Naive thymus-derived CD4-positive, alpha-beta T cell (primary cell): ENCODE measurements at regions of chr12 and their contacts with region 1.

Region 1: DNA sequence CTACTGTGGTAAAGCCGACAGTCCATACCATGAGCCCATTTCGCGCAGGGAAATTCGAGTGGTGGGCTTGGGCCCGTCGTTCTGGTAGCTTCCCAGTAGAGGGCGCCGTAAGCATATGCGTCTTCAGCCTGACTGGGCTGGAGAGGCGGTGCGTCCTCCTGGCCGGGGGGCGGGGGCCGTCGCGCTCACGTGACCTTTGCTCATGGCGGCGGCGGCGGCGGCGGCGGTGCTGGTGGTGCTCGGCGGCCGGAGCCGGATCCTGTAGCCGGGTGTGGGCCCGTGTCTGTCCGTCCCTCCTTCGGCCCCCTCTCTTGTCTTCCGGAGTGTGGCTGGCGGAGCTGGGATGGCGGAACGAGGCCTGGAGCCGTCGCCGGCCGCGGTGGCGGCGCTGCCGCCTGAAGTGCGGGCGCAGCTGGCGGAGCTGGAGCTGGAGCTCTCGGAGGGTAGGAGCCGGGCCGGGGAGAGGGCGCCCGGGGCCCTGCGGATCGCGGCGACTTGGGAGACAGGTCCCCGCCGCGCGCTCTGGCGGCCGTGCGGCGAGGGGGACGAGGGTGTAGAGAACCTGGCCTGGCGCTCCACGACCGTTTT is at the start of gene DIP2B:
- DNase-seq: peak; percentile 90 to 96 (median 94)
- ATAC-seq: peak; percentile 99
- H3K4me3 ChIP-seq: peak within 1 kb of the TSS; percentile 83
- H3K4me3 Mint-ChIP-seq: peak within 1 kb of the TSS; percentile 93 to 99 (median 98)
- H3K27ac ChIP-seq: peak within 1 kb of the TSS; percentile 93
- H3K27ac Mint-ChIP-seq: peak within 1 kb of the TSS; percentile 90 to 97 (median 94)
- H3K4me1 ChIP-seq: peaks cover 33 to 40% of the 10 kb centered on the region in 2 donors
- H3K4me1 Mint-ChIP-seq: peaks cover 36 to 49% (median 43%) of the 10 kb centered on the region in 7 donors
- H3K27me3 ChIP-seq: no peaks in the 10 kb centered on the region
- H3K27me3 Mint-ChIP-seq: no peaks in the 10 kb centered on the region
- total RNA-seq, gene DIP2B: 34.1 to 41.8 (median 39.9) TPM

Region 2: DNA sequence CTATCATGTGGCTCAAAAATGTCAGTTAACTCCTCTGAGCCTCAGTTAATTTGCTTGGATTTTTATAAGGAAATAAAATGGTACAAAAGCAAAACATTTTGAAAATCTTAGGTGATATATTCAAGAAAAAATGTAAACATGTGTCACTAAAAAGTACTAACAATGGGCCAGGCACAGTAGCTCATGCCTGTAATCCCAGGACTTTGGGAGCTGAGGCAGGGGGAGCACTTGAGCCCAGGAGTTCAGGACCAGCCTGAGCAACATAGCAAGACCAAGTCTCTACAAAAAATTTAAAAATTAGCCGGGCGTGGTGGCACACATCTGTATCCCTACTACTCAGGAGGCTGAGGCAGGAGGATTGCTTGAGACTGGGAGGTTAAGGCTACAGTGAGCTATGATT is 506.4 kb before region 1 on chr12:
- CTCF ChIA-PET with region 1: no interaction called
- POLR2A ChIA-PET with region 1: no interaction called
- intact Hi-C with region 1: no loop called
- DNase-seq: no peak
- ATAC-seq: no peak
- H3K4me3 ChIP-seq: no peak overlapping the region
- H3K4me3 Mint-ChIP-seq: no peak overlapping the region
- H3K27ac ChIP-seq: no peak overlapping the region
- H3K27ac Mint-ChIP-seq: no peak overlapping the region
- H3K4me1 ChIP-seq: no peaks in the 10 kb centered on the region
- H3K4me1 Mint-ChIP-seq: peaks cover 0 to 2% (median 0%) of the 10 kb centered on the region in 7 donors
- H3K27me3 ChIP-seq: no peaks in the 10 kb centered on the region
- H3K27me3 Mint-ChIP-seq: no peaks in the 10 kb centered on the region

Region 3: DNA sequence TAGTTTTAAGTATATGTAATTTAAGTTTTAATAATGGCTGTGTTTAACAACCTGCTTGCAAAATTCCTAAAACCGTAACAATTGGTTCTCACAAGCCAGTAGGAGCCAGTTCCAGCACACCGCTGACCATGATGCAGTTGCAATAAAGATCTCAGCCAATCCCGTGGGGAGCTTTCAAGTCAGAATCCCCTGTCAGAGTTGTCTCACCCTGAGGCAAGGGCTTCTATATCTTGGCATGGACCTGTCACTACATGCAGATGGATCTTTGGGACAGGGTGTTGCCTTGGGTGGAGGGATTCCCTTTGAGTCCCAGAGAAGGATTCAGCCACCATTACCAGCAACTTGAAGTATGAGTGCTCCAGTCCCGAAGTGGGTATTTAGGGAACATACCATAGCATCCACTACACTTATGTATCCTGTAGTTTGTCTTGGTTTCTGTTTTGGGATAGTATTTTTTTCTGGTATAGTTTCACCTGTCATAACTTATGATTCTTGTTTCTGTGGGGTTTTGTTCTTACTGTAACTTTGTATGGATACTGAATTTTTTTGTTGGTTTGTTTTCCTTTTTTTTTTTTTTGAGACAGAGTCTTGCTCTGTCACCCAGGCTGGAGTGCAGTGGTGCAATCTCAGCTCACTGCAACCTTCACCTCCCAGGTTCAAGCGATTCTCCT is 191.5 kb before region 1 on chr12:
- CTCF ChIA-PET with region 1: no interaction called
- POLR2A ChIA-PET with region 1: no interaction called
- intact Hi-C with region 1: no loop called
- DNase-seq: no peak
- ATAC-seq: no peak
- H3K4me3 ChIP-seq: no peak overlapping the region
- H3K4me3 Mint-ChIP-seq: no peak overlapping the region
- H3K27ac ChIP-seq: no peak overlapping the region
- H3K27ac Mint-ChIP-seq: no peak overlapping the region
- H3K4me1 ChIP-seq: no peaks in the 10 kb centered on the region
- H3K4me1 Mint-ChIP-seq: peaks cover 0 to 3% (median 0%) of the 10 kb centered on the region in 7 donors
- H3K27me3 ChIP-seq: no peaks in the 10 kb centered on the region
- H3K27me3 Mint-ChIP-seq: no peaks in the 10 kb centered on the region

Region 4: GRCh38 chr12:50517456-50518048 is 12.7 kb after region 1 on chr12:
- CTCF ChIA-PET with region 1: interaction called, 11 read pairs
- POLR2A ChIA-PET with region 1: interaction called, 84 read pairs
- intact Hi-C with region 1: loop called (anchors 1 kb)
- DNase-seq: peak in 5 of 9 donors; percentile 19 to 53 (median 36)
- ATAC-seq: peak; percentile 82
- H3K4me3 ChIP-seq: no peak overlapping the region
- H3K4me3 Mint-ChIP-seq: no peak overlapping the region
- H3K27ac ChIP-seq: peak overlapping the region; percentile 65
- H3K27ac Mint-ChIP-seq: no peak overlapping the region
- H3K4me1 ChIP-seq: peaks cover 19 to 81% of the 10 kb centered on the region in 2 donors
- H3K4me1 Mint-ChIP-seq: peaks cover 43 to 65% (median 58%) of the 10 kb centered on the region in 7 donors
- H3K27me3 ChIP-seq: no peaks in the 10 kb centered on the region
- H3K27me3 Mint-ChIP-seq: no peaks in the 10 kb centered on the region

Region 5: DNA sequence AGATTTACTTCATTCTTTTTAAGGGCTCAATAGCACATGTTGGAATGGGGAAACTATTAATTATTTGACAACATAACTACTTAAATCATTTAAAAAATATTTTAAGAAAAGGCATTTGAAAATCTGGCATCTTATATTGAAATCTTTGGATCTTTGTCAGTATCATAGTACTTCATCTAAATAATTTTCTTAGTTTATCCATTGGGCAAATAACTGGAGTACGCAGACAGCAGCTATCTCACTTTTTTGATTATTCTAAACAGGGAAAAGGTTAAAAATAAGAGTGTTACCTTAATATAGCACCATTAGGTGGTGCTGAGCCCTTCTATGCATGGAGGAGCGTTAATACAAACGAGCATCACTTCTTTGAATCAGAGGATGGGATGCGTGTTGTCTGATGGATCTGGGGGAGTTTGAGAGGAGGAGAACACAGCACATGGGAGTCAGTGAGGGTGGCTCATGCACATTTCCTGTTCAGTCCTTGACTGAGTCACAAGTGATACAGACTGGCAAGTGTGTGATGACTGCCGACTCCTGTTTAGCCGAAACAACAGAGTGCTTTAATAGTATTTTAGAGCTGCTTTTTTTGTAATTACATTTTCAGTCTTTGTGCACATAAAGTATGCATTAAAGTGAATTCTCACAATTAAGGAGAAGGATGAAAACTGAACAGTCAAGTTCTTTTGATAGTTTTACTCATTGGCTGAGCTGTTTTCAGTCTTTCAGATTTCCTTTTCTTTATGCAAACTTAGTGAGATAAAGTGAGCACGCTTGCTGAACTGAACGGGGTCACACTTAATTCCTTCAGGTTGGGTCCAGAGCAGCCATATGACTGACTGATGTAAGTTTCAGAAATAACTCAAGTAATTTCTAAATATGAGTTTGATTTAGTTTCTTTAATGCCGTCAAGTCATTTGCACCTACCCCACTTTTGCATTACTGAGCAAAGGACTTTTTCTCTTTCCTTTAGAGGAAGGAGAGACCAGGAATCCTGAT is 92.6 kb after region 1 on chr12:
- CTCF ChIA-PET with region 1: interaction called, 5 read pairs
- POLR2A ChIA-PET with region 1: interaction called, 7 read pairs
- intact Hi-C with region 1: loop called (anchors 1 to 2 kb)
- DNase-seq: peak in 8 of 9 donors; percentile 8 to 55 (median 33)
- ATAC-seq: peak; percentile 88
- H3K4me3 ChIP-seq: no peak overlapping the region
- H3K4me3 Mint-ChIP-seq: peak overlapping the region in 9 of 10 donors; percentile 26 to 76 (median 62)
- H3K27ac ChIP-seq: peak overlapping the region; percentile 36
- H3K27ac Mint-ChIP-seq: peak overlapping the region in 8 of 9 donors; percentile 16 to 80 (median 58)
- H3K4me1 ChIP-seq: peaks cover 0 to 7% of the 10 kb centered on the region in 2 donors
- H3K4me1 Mint-ChIP-seq: peaks cover 38 to 76% (median 58%) of the 10 kb centered on the region in 7 donors
- H3K27me3 ChIP-seq: no peaks in the 10 kb centered on the region
- H3K27me3 Mint-ChIP-seq: no peaks in the 10 kb centered on the region

Region 6: DNA sequence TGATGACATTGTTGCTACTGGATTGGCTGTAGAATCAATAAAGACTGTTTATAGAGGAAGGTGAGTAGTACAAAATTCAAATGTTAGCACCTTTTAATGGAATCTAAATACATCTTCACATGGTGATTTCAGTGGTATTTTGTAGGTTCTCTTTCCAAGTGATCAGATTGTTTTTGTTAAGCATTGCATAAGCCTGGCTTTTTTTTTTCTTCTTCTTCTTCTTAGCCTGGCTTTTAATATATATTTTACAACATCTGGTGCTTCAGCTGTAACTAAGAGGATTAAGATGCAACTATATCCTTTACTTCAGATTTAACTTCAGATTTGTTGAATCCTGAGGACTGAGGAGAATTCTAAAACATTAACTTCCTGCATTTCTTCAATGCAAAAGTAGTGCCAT is 201.7 kb after region 1 on chr12:
- CTCF ChIA-PET with region 1: no interaction called
- POLR2A ChIA-PET with region 1: no interaction called
- intact Hi-C with region 1: no loop called
- DNase-seq: no peak
- ATAC-seq: no peak
- H3K4me3 ChIP-seq: no peak overlapping the region
- H3K4me3 Mint-ChIP-seq: no peak overlapping the region
- H3K27ac ChIP-seq: no peak overlapping the region
- H3K27ac Mint-ChIP-seq: peak overlapping the region in 2 of 9 donors; percentile 12
- H3K4me1 ChIP-seq: no peaks in the 10 kb centered on the region
- H3K4me1 Mint-ChIP-seq: no peaks in the 10 kb centered on the region
- H3K27me3 ChIP-seq: no peaks in the 10 kb centered on the region
- H3K27me3 Mint-ChIP-seq: no peaks in the 10 kb centered on the region

Region 7: DNA sequence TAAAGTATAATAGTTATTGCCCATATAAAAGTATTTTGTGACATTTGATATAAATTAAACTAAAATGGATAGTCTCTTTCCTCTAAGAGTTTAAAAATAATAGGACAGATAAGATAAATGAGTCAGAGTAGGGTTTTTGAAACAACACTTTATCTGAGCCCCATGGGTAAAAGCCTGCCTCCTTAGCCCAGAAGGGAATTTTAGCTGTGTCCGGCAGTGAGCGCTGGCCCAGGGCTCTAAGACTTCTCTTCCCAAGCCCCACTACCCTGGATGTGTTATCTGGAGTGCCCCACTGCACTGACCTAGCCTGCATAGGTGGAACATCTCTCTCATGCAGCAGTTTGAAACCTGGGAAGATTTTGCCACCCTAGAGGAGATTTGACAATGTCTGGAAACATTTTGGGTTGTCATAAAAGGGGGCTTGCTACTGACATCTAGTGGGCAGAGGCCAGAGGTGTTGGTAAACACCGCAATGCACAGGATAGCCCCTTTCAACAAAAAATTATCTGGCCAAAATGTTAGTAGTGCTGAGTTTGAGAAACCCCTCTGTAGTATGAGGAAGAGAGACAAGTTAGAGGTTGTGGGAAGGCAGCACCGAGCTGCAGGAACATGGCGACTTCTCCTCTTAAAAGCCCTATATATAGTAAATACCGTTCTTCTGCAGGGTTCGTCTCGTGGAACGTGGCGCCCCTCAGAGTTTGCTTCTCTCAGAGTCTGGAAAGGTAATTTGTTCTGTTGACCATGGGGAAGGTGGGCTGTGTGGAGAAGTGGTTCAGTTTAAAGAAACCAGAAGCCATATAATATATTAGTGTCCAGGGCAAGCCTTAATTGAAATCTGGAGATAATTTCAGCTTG is 229.7 kb after region 1 on chr12:
- CTCF ChIA-PET with region 1: interaction called, 3 read pairs
- POLR2A ChIA-PET with region 1: no interaction called
- intact Hi-C with region 1: loop called in 1 of 2 experiments (anchors 1 kb)
- DNase-seq: peak in 3 of 9 donors; percentile 13 to 29 (median 15)
- ATAC-seq: peak; percentile 55
- H3K4me3 ChIP-seq: no peak overlapping the region
- H3K4me3 Mint-ChIP-seq: no peak overlapping the region
- H3K27ac ChIP-seq: no peak overlapping the region
- H3K27ac Mint-ChIP-seq: peak overlapping the region in 3 of 9 donors; percentile 8 to 13 (median 11)
- H3K4me1 ChIP-seq: no peaks in the 10 kb centered on the region
- H3K4me1 Mint-ChIP-seq: no peaks in the 10 kb centered on the region
- H3K27me3 ChIP-seq: no peaks in the 10 kb centered on the region
- H3K27me3 Mint-ChIP-seq: no peaks in the 10 kb centered on the region